WTC11 (cell line): ENCODE measurements at regions of chr11 and their contacts with region 1.

Region 1: GRCh38 chr11:69642913-69643632 is 2.1 kb downstream of the CCND1 start:
- DNase-seq: peak; percentile 77
- ATAC-seq: peak; percentile 2
- H3K4me3 Mint-ChIP-seq: peak overlapping the region; percentile 67
- H3K27ac Mint-ChIP-seq: no peak overlapping the region
- H3K4me1 Mint-ChIP-seq: peaks cover 8% of the 10 kb centered on the region; the same call in 1 of the 2 replicates
- H3K27me3 Mint-ChIP-seq: no peaks in the 10 kb centered on the region
- CTCF ChIP-seq: peak; percentile 92

Region 2: GRCh38 chr11:69292221-69292648 is 350.8 kb before region 1 on chr11:
- CTCF ChIA-PET with region 1: interaction called, 26 read pairs
- POLR2A ChIA-PET with region 1: interaction called, 7 read pairs
- DNase-seq: peak; percentile 80
- ATAC-seq: peak; percentile 43
- H3K4me3 Mint-ChIP-seq: no peak overlapping the region
- H3K27ac Mint-ChIP-seq: no peak overlapping the region
- H3K4me1 Mint-ChIP-seq: peaks cover 15% of the 10 kb centered on the region
- H3K27me3 Mint-ChIP-seq: no peaks in the 10 kb centered on the region
- CTCF ChIP-seq: peak; percentile 92

Region 3: DNA sequence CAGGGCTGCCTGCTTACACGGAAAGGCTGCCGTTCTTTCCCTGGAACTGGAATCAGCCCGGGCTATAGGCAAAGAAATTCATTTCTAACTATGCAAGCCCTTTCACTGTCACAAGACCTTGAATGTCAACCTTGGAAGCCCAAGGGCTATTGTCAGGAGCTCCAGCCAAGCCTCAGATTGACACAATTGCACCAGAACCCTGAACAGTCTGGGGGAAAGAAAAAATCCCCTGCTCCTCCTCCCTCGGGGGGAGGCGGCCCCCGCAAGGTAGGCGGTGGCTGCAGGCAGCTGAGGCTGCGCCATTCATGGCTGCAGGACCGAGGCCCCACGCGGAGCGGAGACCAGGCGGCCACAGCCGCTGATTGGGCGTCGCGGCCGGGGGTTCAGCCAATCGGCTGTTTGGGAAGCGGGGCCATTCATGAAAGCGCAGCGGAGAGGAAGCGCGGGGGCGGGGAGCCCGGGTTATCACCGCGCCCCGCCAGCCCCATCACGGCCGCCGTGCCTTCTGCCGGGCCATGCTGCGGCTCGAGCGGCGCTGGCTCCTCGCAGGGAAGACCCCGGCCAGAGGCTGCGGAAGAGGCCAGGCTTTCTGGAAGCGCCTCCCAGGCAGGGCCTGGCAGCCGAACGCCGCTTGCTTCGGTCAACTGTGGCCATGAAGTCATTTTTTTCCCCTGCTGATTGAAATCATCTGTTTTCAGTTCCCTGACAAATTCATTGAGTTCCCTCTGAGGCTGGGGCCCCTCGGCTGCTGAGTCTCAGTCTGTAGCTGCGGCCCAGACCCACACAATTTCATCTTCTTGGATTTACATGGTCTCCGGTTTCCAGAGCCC is 199.7 kb before region 1 on chr11:
- CTCF ChIA-PET with region 1: interaction called, 6 read pairs
- POLR2A ChIA-PET with region 1: interaction called, 12 read pairs
- DNase-seq: peak; percentile 89
- ATAC-seq: peak; percentile 75
- H3K4me3 Mint-ChIP-seq: peak overlapping the region; percentile 38
- H3K27ac Mint-ChIP-seq: peak overlapping the region; percentile 84
- H3K4me1 Mint-ChIP-seq: peaks cover 41% of the 10 kb centered on the region
- H3K27me3 Mint-ChIP-seq: peaks cover 8% of the 10 kb centered on the region
- CTCF ChIP-seq: no peak

Region 4: GRCh38 chr11:69654569-69655327 is 11.7 kb after region 1 on chr11:
- CTCF ChIA-PET with region 1: interaction called, 23 read pairs
- POLR2A ChIA-PET with region 1: interaction called, 9 read pairs
- DNase-seq: no peak
- ATAC-seq: no peak; the same call in 1 of the 2 replicates
- H3K4me3 Mint-ChIP-seq: no peak overlapping the region
- H3K27ac Mint-ChIP-seq: 0 out of 2 replicates have a peak overlapping the region, but pooled peaks have one; percentile 45
- H3K4me1 Mint-ChIP-seq: peaks cover 28% of the 10 kb centered on the region
- H3K27me3 Mint-ChIP-seq: no peaks in the 10 kb centered on the region
- CTCF ChIP-seq: no peak